BJ (cell line): ENCODE measurements at regions of chr7 and their contacts with region 1.

Region 1: GRCh38 chr7:23514755-23515154 is 17.0 kb downstream of the TRA2A start:
- DNase-seq: no peak
- H3K4me3 ChIP-seq: no peak overlapping the region
- H3K27me3 ChIP-seq: no peaks in the 10 kb centered on the region
- CTCF ChIP-seq: no peak

Region 2: DNA sequence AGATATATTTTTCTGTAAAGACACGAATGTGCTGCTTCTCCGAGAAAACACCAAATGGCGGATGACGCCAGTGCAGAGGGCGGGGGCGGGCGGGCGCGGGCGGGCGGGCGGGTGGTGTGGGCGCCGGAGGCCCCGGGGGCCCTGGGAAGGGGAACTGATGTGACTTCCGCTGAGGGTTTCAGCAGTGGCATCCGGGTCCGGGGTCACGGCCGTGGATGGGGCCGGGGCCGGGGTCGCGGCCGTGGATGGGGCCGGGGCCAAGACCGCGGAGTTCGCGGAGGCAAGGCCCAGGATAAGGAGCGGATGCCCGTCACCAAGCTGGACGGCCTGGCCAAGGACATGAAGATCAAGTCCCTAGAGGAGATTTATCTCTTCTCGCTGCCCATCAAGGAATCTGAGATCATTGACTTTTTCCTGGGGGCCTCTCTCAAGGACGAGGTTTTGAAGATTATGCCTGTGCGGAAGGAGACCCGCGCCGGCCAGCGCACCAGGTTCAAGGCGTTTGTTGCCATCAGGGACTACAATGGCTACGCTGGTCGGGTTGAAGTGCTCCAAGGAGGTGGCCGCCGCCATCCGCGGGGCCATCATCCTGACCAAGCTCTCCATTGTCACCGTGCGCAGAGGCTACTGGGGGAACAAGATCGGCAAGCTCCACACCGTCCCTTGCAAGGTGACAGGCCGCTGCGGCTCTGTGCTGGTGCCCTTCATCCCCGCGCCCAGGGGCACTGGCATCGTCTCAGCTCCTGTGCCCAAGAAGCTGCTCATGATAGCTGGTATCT is 24.2 kb before region 1 on chr7:
- CTCF ChIA-PET with region 1: no interaction called
- POLR2A ChIA-PET with region 1: interaction called, 11 read pairs
- DNase-seq: no peak
- H3K4me3 ChIP-seq: peak overlapping the region; percentile 28
- H3K27me3 ChIP-seq: no peaks in the 10 kb centered on the region
- CTCF ChIP-seq: no peak